H1 (cell line): ENCODE measurements at regions of chr15 and their contacts with region 1.

Region 1: DNA sequence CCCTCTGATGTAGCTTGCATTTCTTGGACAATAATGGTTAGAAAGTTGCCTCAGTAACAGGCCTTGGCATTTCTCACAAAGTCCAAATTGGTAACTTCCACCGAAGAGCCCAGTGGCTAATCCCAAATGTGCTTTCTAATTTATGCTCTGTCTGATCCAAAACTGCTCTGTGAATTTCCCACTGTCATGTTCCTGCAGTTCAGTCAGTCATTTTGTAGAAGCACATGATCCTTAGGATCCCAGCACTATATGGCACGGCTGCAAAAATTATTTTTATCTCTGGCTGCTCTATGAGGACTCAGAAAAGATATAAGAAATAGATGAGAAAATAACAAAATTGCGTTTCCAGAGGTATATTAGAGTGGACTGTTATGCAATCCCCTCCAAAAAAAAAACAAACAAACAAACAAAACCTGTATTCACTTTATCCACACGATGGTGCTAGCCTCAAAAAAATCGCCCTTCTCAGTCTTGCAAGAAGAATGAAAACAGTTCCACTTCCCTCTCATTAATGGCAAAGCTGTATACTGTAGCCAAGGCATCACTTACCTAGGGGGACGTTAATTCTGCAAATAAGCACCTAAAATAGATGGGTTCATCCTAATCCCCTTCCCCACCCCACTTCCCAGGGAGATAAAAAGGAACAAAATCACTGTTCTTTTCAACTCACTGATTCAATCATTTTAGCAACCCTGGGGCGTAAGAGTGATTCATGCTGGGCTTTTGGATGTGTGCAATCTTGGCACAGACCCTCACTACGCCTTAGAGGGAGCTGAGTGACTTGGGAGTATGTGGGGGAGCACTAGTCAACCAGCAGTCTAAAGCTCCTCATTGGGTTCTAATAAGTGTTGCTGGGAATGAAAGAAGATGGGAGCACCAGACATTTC is 61.3 kb downstream of the TMCO5A start:
- DNase-seq: no peak
- H3K4me3 ChIP-seq: no peak overlapping the region
- H3K27ac ChIP-seq: no peak overlapping the region
- H3K4me1 ChIP-seq: no peaks in the 10 kb centered on the region
- H3K27me3 ChIP-seq: no peaks in the 10 kb centered on the region
- CTCF ChIP-seq: peak in 2 of 3 experiments; percentile 59; a peak in 2 of 4 replicates
- EP300 ChIP-seq: no peak
- POLR2A ChIP-seq: no peak
- RAD21 ChIP-seq: peak; percentile 89 to 91

Region 2: GRCh38 chr15:37758412-37758811 is 237.3 kb before region 1 on chr15:
- CTCF ChIA-PET with region 1: no interaction called
- POLR2A ChIA-PET with region 1: no interaction called
- DNase-seq: no peak
- H3K4me3 ChIP-seq: no peak overlapping the region
- H3K27ac ChIP-seq: no peak overlapping the region
- H3K4me1 ChIP-seq: no peaks in the 10 kb centered on the region
- H3K27me3 ChIP-seq: no peaks in the 10 kb centered on the region
- CTCF ChIP-seq: no peak
- EP300 ChIP-seq: no peak
- POLR2A ChIP-seq: no peak
- RAD21 ChIP-seq: no peak

Region 3: GRCh38 chr15:37783290-37783689 is 212.4 kb before region 1 on chr15:
- CTCF ChIA-PET with region 1: no interaction called
- POLR2A ChIA-PET with region 1: no interaction called
- DNase-seq: no peak
- H3K4me3 ChIP-seq: no peak overlapping the region
- H3K27ac ChIP-seq: no peak overlapping the region
- H3K4me1 ChIP-seq: no peaks in the 10 kb centered on the region
- H3K27me3 ChIP-seq: no peaks in the 10 kb centered on the region
- CTCF ChIP-seq: no peak
- EP300 ChIP-seq: no peak
- POLR2A ChIP-seq: no peak
- RAD21 ChIP-seq: no peak

Region 4: DNA sequence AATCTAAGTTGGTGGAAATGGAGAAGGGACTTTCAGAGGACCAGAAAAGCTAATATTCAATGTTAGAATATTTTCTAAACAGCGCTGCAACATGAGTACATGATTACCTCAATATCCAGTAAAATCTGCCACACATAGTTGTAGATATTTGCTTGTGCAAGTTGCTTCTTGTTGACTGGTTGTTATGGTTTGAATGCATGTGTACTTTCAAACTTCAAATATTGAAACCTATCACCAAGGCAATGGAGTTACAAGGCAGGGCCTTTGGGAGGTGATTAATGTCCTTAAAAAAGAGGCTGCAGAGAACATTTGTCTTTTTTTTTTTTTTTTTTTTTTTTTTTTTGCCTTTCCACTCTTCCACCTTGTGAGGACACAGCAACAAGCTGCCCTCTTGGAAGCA is 11.3 kb before region 1 on chr15:
- CTCF ChIA-PET with region 1: interaction called, 14 read pairs
- POLR2A ChIA-PET with region 1: no interaction called
- DNase-seq: no peak
- H3K4me3 ChIP-seq: no peak overlapping the region
- H3K27ac ChIP-seq: no peak overlapping the region
- H3K4me1 ChIP-seq: no peaks in the 10 kb centered on the region
- H3K27me3 ChIP-seq: no peaks in the 10 kb centered on the region
- CTCF ChIP-seq: no peak
- EP300 ChIP-seq: no peak
- POLR2A ChIP-seq: no peak
- RAD21 ChIP-seq: no peak

Region 5: DNA sequence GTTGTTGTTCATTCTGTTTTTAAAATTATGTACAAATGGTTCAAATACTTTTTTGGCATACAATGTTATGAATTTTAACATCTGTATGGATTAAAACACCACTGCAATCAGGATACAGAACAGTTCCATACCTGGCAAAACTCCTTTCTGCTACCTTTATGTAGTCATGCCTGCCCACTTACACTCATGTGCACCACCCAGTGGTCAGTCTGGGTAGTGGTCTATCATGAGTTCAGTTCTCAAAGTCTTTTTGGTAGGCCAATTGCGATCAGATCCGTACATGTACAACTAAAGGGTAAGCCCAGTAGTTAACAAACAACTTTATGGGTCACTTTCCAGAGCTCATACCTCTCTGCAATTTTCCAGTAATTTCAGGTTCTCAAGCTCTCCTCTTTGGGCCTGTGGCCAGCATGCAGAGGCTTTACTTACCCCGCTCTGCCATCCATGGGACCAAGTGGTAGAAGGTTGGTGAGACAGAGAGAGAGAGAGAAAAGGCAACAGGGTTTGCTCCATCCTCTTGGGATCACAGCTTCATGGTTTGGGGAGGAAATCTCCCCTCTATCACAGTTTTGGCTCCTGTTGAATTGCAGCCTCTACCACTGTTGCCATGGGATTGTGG is 394.3 kb after region 1 on chr15:
- CTCF ChIA-PET with region 1: interaction called, 31 read pairs
- POLR2A ChIA-PET with region 1: no interaction called
- DNase-seq: peak in 1 of 2 experiments; percentile 89
- H3K4me3 ChIP-seq: no peak overlapping the region
- H3K27ac ChIP-seq: no peak overlapping the region
- H3K4me1 ChIP-seq: no peaks in the 10 kb centered on the region
- H3K27me3 ChIP-seq: no peaks in the 10 kb centered on the region
- CTCF ChIP-seq: peak; percentile 40 to 90 (median 76)
- EP300 ChIP-seq: no peak
- POLR2A ChIP-seq: no peak
- RAD21 ChIP-seq: peak; percentile 77 to 84

Region 6: GRCh38 chr15:38414357-38414756 is 418.7 kb after region 1 on chr15:
- CTCF ChIA-PET with region 1: interaction called, 10 read pairs
- POLR2A ChIA-PET with region 1: interaction called, 4 read pairs
- DNase-seq: peak; percentile 38 to 50
- H3K4me3 ChIP-seq: no peak overlapping the region
- H3K27ac ChIP-seq: no peak overlapping the region
- H3K4me1 ChIP-seq: no peaks in the 10 kb centered on the region
- H3K27me3 ChIP-seq: no peaks in the 10 kb centered on the region
- CTCF ChIP-seq: peak; percentile 73 to 83 (median 82)
- EP300 ChIP-seq: no peak
- POLR2A ChIP-seq: no peak
- RAD21 ChIP-seq: peak; percentile 92 to 93